Right lobe of liver (tissue), 6 donors: ENCODE measurements at regions of chr7 and their contacts with region 1.

Region 1: DNA sequence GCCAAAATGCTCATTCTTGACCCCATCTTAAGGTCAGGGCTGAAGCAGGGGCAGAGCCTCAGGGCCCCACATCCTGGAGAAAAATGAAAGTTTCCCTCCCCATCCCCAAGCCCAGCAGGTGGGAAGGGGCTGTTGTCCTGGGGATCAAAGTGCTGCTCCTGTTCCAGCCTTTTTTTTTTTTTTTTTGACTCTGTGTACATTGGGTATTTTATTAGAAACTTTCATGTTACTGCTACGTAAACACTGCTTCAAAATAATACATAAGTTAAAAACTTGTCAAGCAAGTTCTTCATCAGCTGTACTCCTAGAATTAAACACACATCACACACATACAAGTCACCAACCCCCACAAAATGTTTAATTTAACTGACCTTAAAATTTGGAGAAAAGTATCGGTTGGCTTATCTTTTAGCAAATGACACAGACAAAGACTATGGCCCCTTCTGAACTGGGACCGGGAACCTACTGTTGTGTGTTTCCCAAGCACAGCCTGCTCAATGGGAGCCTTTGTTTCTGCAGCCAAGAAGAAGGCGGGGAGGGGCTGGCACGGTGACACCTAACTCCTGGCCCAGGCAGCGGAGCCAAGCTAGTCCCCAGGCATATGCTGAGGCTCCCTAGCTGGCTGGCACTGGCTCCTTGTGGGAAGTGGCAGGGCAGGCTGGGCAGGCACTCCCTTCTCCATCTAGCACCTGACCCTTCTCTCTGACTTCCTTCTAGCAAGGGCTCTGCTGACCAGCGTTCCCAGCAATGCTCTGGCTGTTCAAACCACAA is 325.2 kb downstream of the PLXNA4 start:
- DNase-seq: no peak
- ATAC-seq: peak; percentile 42 to 63 (median 49)
- H3K4me3 ChIP-seq: no peak overlapping the region
- H3K27ac ChIP-seq: no peak overlapping the region
- H3K4me1 ChIP-seq: peaks cover 0 to 2% (median 0%) of the 10 kb centered on the region in 4 donors
- H3K27me3 ChIP-seq: no peaks in the 10 kb centered on the region
- CTCF ChIP-seq: no peak
- POLR2A ChIP-seq: no peak

Region 2: DNA sequence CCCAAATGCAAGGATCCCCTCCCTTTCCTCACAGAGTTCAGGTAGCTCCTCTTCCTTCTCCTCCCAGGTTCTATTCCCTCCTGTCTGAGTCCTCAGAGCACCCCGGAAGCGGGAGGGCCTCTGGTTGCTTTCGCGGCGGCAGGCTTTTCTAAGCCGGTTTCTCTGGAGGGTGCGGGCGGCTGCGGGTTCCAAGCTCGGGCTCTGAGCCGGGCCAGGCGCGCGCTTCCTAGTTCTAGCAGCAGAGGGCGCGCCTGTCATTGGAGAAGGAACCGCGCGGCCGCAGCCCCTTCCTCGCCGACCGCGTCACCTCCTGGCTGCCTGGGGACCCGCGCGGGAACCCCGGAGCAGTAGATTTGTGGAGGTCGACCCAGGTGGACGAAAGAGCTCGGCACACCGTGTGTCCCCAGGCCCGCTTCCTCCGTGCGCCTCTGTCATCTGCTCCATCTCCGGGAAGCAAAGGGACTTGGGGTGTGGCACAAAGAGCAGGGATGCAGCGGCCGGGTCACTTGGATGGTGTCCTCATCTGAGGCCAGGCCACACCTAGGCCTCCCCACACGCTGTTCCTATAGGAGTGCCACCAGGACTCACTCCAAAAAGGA is 305.7 kb before region 1 on chr7:
- intact Hi-C with region 1: loop called in 1 of 2 experiments (anchors 10 kb)
- DNase-seq: peak; percentile 38 to 56 (median 49)
- ATAC-seq: peak; percentile 74 to 85 (median 82)
- H3K4me3 ChIP-seq: no peak overlapping the region
- H3K27ac ChIP-seq: no peak overlapping the region
- H3K4me1 ChIP-seq: peaks cover 0 to 8% (median 0%) of the 10 kb centered on the region in 4 donors
- H3K27me3 ChIP-seq: peaks cover 0 to 13% of the 10 kb centered on the region in 2 donors
- CTCF ChIP-seq: peak; percentile 57 to 89 (median 78)
- POLR2A ChIP-seq: no peak